ENCODE measurements at regions of chr9 and their contacts with region 1.

Region 1: DNA sequence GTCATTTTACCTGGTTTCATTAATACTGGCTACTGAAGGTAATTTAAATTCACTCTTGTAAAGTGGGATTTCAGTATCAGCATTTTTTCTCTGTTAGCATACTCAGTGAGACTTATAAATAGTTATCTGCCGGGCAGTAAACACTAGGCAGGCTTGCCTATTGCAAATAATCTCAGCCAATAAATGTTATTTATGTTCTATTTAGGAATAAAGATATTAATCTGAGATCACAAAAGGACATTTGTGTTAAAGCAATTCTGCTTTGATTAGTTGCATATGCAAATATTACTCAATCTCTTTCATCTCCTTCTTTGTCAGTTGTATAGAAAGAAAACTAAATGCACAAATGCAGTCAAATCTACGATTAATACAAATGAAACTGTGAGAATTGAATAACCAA is 827.8 kb downstream of the TLE4 start:
- DNase-seq: no peak
- ATAC-seq: no peak
- H3K4me3 ChIP-seq: no peak overlapping the region
- H3K4me3 Mint-ChIP-seq: no peak overlapping the region
- H3K27ac ChIP-seq: no peak overlapping the region
- H3K27ac Mint-ChIP-seq: no peak overlapping the region
- H3K4me1 ChIP-seq: no peaks in the 10 kb centered on the region
- H3K4me1 Mint-ChIP-seq: no peaks in the 10 kb centered on the region
- H3K27me3 ChIP-seq: no peaks in the 10 kb centered on the region
- H3K27me3 Mint-ChIP-seq: no peaks in the 10 kb centered on the region
- CTCF ChIP-seq: no peak

Region 2: GRCh38 chr9:80127920-80128319 is 271.7 kb before region 1 on chr9:
- CTCF ChIA-PET with region 1: no interaction called
- POLR2A ChIA-PET with region 1: no interaction called
- intact Hi-C with region 1: no loop called
- DNase-seq: no peak
- ATAC-seq: no peak
- H3K4me3 ChIP-seq: no peak overlapping the region
- H3K4me3 Mint-ChIP-seq: no peak overlapping the region
- H3K27ac ChIP-seq: no peak overlapping the region
- H3K27ac Mint-ChIP-seq: no peak overlapping the region
- H3K4me1 ChIP-seq: no peaks in the 10 kb centered on the region
- H3K4me1 Mint-ChIP-seq: no peaks in the 10 kb centered on the region
- H3K27me3 ChIP-seq: no peaks in the 10 kb centered on the region
- H3K27me3 Mint-ChIP-seq: peaks cover 7% of the 10 kb centered on the region
- CTCF ChIP-seq: no peak

Region 3: GRCh38 chr9:80351612-80352011 is 48.0 kb before region 1 on chr9:
- CTCF ChIA-PET with region 1: no interaction called
- POLR2A ChIA-PET with region 1: no interaction called
- intact Hi-C with region 1: loop called in 1 of 2 experiments (anchors 5 kb)
- DNase-seq: no peak
- ATAC-seq: no peak
- H3K4me3 ChIP-seq: no peak overlapping the region
- H3K4me3 Mint-ChIP-seq: no peak overlapping the region
- H3K27ac ChIP-seq: no peak overlapping the region
- H3K27ac Mint-ChIP-seq: no peak overlapping the region
- H3K4me1 ChIP-seq: no peaks in the 10 kb centered on the region
- H3K4me1 Mint-ChIP-seq: no peaks in the 10 kb centered on the region
- H3K27me3 ChIP-seq: no peaks in the 10 kb centered on the region
- H3K27me3 Mint-ChIP-seq: no peaks in the 10 kb centered on the region
- CTCF ChIP-seq: no peak

Region 4: GRCh38 chr9:81045658-81046057 is 646.1 kb after region 1 on chr9:
- CTCF ChIA-PET with region 1: no interaction called
- POLR2A ChIA-PET with region 1: no interaction called
- intact Hi-C with region 1: no loop called
- DNase-seq: no peak
- ATAC-seq: no peak
- H3K4me3 ChIP-seq: no peak overlapping the region
- H3K4me3 Mint-ChIP-seq: no peak overlapping the region
- H3K27ac ChIP-seq: no peak overlapping the region
- H3K27ac Mint-ChIP-seq: no peak overlapping the region
- H3K4me1 ChIP-seq: no peaks in the 10 kb centered on the region
- H3K4me1 Mint-ChIP-seq: no peaks in the 10 kb centered on the region
- H3K27me3 ChIP-seq: no peaks in the 10 kb centered on the region
- H3K27me3 Mint-ChIP-seq: no peaks in the 10 kb centered on the region
- CTCF ChIP-seq: no peak

Measured in CD8-positive, alpha-beta T cell (primary cell).